Activated T-helper 1 cell treated with anti-CD3 and anti-CD28 coated beads, Interleukin-12 subunit alpha, Interleukin-12 subunit beta, Interleukin-2, Interleukin-4 antibody, amounts not matched to agents 30 ng/mL and 10 ng/mL and 1 ng/mL, durations not matched to agents 14 hours and 24 hours and 36 hours (primary cell): ENCODE measurements at regions of chr1 and their contacts with region 1.

Region 1: GRCh38 chr1:158931055-158931737 is at the start of gene PYHIN1:
- DNase-seq: peak; percentile 18
- H3K4me3 Mint-ChIP-seq: peak within 1 kb of the TSS; percentile 91
- H3K27ac Mint-ChIP-seq: peak within 1 kb of the TSS; percentile 91
- H3K4me1 Mint-ChIP-seq: peaks cover 48% of the 10 kb centered on the region
- H3K27me3 Mint-ChIP-seq: peaks cover 5% of the 10 kb centered on the region
- total RNA-seq, gene PYHIN1: 19.5 and 19.9 TPM in 2 replicates

Region 2: GRCh38 chr1:158716335-158716734 is 214.9 kb before region 1 on chr1:
- intact Hi-C with region 1: loop called (anchors 1 kb)
- DNase-seq: no peak
- H3K4me3 Mint-ChIP-seq: no peak overlapping the region
- H3K27ac Mint-ChIP-seq: peak overlapping the region; percentile 56
- H3K4me1 Mint-ChIP-seq: no peaks in the 10 kb centered on the region
- H3K27me3 Mint-ChIP-seq: peaks cover 8% of the 10 kb centered on the region

Region 3: GRCh38 chr1:158969855-158970254 is 38.7 kb after region 1 on chr1:
- intact Hi-C with region 1: loop called (anchors 1 kb)
- DNase-seq: no peak
- H3K4me3 Mint-ChIP-seq: no peak overlapping the region
- H3K27ac Mint-ChIP-seq: peak overlapping the region; percentile 56
- H3K4me1 Mint-ChIP-seq: peaks cover 13% of the 10 kb centered on the region
- H3K27me3 Mint-ChIP-seq: peaks cover 3% of the 10 kb centered on the region

Region 4: GRCh38 chr1:159678939-159679338 is 747.7 kb after region 1 on chr1:
- intact Hi-C with region 1: no loop called
- DNase-seq: no peak
- H3K4me3 Mint-ChIP-seq: no peak overlapping the region
- H3K27ac Mint-ChIP-seq: no peak overlapping the region
- H3K4me1 Mint-ChIP-seq: no peaks in the 10 kb centered on the region
- H3K27me3 Mint-ChIP-seq: no peaks in the 10 kb centered on the region